Lower leg skin (tissue), 4 donors: ENCODE measurements at regions of chr17 and their contacts with region 1.

Region 1: DNA sequence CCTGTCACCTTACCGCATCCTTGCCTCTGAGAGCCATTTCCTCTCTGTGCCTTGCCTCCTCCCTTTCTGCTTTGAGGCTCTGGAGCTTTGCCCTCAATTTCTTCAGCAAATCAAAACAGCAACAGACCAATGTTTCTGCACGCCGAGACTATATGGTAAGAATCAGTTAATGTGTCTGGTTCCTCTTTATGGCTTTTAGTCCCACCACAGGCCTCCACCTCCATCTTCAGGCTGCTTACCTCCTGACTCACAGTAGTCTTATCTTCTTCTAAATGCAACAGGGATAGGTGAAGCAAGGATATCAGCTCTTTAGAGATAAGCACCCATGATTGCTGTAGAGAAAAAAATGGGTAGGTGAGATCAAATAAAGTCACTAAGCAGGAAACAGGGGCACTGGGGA is 9.2 kb upstream of the ALDOC start:
- DNase-seq: no peak
- H3K4me3 ChIP-seq: no peak overlapping the region
- CTCF ChIP-seq: no peak
- POLR2A ChIP-seq: no peak

Region 2: GRCh38 chr17:28553000-28553505 is 32.8 kb before region 1 on chr17:
- intact Hi-C with region 1: loop called (anchors 1 kb)
- DNase-seq: no peak
- H3K4me3 ChIP-seq: no peak overlapping the region
- CTCF ChIP-seq: no peak
- POLR2A ChIP-seq: no peak